Caco-2 (cell line): ENCODE measurements at regions of chr3 and their contacts with region 1.

Region 1: DNA sequence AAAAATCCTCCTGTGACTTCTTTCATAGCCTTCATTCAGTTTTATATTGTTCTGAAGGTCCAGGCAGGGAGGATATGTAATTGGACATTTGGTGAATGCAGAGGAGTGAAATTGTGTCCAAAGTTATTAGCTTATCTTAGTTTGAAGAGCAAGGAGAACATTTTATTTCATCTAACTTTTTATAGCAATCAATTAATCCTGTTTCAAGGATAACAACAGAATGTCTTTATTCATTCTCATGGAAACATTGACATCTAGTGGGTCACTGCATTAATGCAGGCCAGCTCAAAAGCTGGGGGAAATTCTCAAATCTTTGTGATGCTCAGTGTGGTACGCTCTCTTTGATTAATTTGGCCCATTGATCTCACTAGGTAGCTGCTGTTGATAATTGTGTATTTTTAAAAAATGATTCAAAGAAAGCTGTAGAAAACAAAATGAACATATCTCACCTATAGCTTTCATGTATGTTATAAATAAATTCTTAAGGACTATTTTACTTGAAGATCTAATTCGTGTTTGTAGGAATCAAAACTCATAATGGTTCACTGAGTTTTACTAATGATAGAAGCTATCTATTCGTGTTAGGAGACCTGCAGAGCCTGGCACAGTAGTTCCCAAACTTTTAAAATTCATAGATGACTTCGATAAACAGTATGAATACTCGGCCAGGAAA is 150.8 kb upstream of the KCNMB2 start:
- DNase-seq: peak in 1 of 2 experiments; percentile 46
- H3K4me3 ChIP-seq: no peak overlapping the region
- H3K4me3 Mint-ChIP-seq: no peak overlapping the region
- H3K27ac Mint-ChIP-seq: no peak overlapping the region
- H3K4me1 ChIP-seq: peaks cover 26% of the 10 kb centered on the region
- H3K4me1 Mint-ChIP-seq: peaks cover 8% of the 10 kb centered on the region
- H3K27me3 ChIP-seq: no peaks in the 10 kb centered on the region
- H3K27me3 Mint-ChIP-seq: no peaks in the 10 kb centered on the region
- CTCF ChIP-seq: peak; percentile 57 to 72

Region 2: GRCh38 chr3:176872771-176873209 is 1512.6 kb before region 1 on chr3:
- CTCF ChIA-PET with region 1: no interaction called
- POLR2A ChIA-PET with region 1: no interaction called
- intact Hi-C with region 1: loop called (anchors 5 kb)
- DNase-seq: peak; percentile 57 to 58
- H3K4me3 ChIP-seq: no peak overlapping the region
- H3K4me3 Mint-ChIP-seq: no peak overlapping the region
- H3K27ac Mint-ChIP-seq: no peak overlapping the region
- H3K4me1 ChIP-seq: no peaks in the 10 kb centered on the region
- H3K4me1 Mint-ChIP-seq: no peaks in the 10 kb centered on the region
- H3K27me3 ChIP-seq: no peaks in the 10 kb centered on the region
- H3K27me3 Mint-ChIP-seq: no peaks in the 10 kb centered on the region
- CTCF ChIP-seq: peak; percentile 71 to 73

Region 3: GRCh38 chr3:177050501-177051237 is 1334.7 kb before region 1 on chr3:
- CTCF ChIA-PET with region 1: interaction called, 6 read pairs
- POLR2A ChIA-PET with region 1: no interaction called
- intact Hi-C with region 1: loop called (anchors 10 kb)
- DNase-seq: peak in 1 of 2 experiments; percentile 17
- H3K4me3 ChIP-seq: no peak overlapping the region
- H3K4me3 Mint-ChIP-seq: no peak overlapping the region
- H3K27ac Mint-ChIP-seq: no peak overlapping the region
- H3K4me1 ChIP-seq: no peaks in the 10 kb centered on the region
- H3K4me1 Mint-ChIP-seq: peaks cover 6% of the 10 kb centered on the region
- H3K27me3 ChIP-seq: no peaks in the 10 kb centered on the region
- H3K27me3 Mint-ChIP-seq: no peaks in the 10 kb centered on the region
- CTCF ChIP-seq: peak; percentile 18 to 38

Region 4: DNA sequence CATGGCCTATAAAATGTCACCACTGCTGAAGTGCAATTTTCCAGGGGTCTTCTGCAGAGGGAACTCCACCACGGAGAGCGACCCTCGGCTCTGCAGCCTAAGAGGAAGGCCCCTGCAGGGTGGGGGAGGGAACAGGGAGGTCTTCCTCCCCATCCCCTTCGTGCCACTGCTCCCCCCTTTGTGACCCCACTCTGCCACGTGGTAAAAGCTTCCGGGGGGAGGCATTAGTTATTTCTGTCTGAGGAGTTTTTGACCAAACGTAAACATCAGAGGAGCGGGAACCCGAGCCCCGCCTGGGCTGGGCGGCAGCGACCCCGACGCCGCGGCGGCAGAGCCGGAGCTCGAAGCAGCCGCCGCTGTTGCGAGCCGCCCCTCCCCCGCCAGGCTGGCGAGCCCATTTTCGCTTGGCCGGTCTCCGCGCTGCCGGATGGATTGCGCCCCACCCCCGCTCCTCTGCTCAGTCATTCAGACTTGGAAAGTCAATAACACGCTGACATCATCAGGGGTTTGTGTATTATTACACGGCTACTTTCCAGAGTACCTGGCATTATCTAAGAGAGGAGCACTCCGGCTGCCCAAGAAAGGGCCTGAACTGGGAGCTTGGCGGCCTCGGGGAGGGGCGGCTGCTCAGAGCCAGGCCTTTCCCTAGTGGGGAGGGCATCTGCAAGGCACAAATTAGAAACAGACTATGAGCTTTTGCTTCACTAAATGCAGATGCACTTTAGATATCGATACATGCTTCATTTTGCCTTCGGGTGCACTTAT is 1025.6 kb before region 1 on chr3:
- CTCF ChIA-PET with region 1: no interaction called
- POLR2A ChIA-PET with region 1: no interaction called
- intact Hi-C with region 1: loop called (anchors 10 kb)
- DNase-seq: peak; percentile 94 to 97
- H3K4me3 ChIP-seq: peak overlapping the region; percentile 39
- H3K4me3 Mint-ChIP-seq: peak overlapping the region; percentile 77
- H3K27ac Mint-ChIP-seq: peak overlapping the region; percentile 89
- H3K4me1 ChIP-seq: peaks cover 39% of the 10 kb centered on the region
- H3K4me1 Mint-ChIP-seq: peaks cover 45% of the 10 kb centered on the region
- H3K27me3 ChIP-seq: no peaks in the 10 kb centered on the region
- H3K27me3 Mint-ChIP-seq: no peaks in the 10 kb centered on the region
- CTCF ChIP-seq: no peak

Region 5: GRCh38 chr3:177777699-177778098 is 607.7 kb before region 1 on chr3:
- CTCF ChIA-PET with region 1: no interaction called
- POLR2A ChIA-PET with region 1: no interaction called
- intact Hi-C with region 1: loop called (anchors 5 kb)
- DNase-seq: peak; percentile 66 to 67
- H3K4me3 ChIP-seq: no peak overlapping the region
- H3K4me3 Mint-ChIP-seq: no peak overlapping the region
- H3K27ac Mint-ChIP-seq: no peak overlapping the region
- H3K4me1 ChIP-seq: no peaks in the 10 kb centered on the region
- H3K4me1 Mint-ChIP-seq: no peaks in the 10 kb centered on the region
- H3K27me3 ChIP-seq: no peaks in the 10 kb centered on the region
- H3K27me3 Mint-ChIP-seq: no peaks in the 10 kb centered on the region
- CTCF ChIP-seq: peak; percentile 61 to 63

Region 6: DNA sequence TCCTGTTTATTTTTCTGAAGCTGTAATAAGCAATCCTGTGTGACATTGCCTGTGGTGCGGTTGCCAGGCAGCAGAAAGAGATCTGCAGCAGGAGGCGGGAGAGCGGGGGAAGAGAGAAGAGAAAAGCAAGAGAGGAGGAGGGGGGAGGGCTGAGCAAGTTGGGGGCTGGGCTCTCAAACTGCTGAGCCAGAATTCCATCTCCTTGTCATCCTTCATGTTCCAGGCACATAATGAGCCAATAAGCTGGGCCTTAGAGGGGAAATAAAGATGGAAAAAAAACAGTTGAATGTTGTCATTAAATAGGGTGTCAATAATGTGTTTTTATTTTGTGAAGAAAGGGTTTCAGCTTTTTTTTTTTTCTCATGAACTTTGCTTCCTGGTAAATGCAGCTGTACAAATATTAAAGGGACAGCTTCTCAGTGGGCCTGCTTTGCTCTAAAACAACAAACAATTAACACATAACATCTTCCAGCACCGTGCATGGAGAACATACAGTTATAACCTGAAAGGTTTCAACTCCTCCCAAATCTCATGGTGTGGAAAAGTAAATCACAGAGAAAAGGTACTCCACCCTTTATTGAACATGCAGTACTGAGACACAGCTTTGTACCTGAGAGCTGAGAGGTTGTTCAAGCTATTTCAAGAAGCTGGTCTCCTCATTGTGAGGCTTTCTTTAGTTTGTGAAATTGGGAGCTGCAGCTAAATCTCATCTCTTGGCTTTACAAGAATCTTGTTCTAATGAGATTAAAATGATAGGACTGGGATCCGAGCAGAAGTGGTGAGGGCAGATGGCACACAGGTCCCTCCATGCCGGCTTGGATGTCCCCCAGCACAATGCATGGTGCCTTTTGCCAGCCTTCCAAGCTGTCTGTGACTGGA is 300.2 kb before region 1 on chr3:
- CTCF ChIA-PET with region 1: interaction called, 3 read pairs
- POLR2A ChIA-PET with region 1: no interaction called
- intact Hi-C with region 1: loop called (anchors 10 kb)
- DNase-seq: peak; percentile 40 to 56
- H3K4me3 ChIP-seq: no peak overlapping the region
- H3K4me3 Mint-ChIP-seq: peak overlapping the region; percentile 10
- H3K27ac Mint-ChIP-seq: no peak overlapping the region
- H3K4me1 ChIP-seq: peaks cover 26% of the 10 kb centered on the region
- H3K4me1 Mint-ChIP-seq: peaks cover 18% of the 10 kb centered on the region
- H3K27me3 ChIP-seq: no peaks in the 10 kb centered on the region
- H3K27me3 Mint-ChIP-seq: no peaks in the 10 kb centered on the region
- CTCF ChIP-seq: no peak

Region 7: GRCh38 chr3:178352326-178353005 is 33.0 kb before region 1 on chr3:
- CTCF ChIA-PET with region 1: no interaction called
- POLR2A ChIA-PET with region 1: no interaction called
- intact Hi-C with region 1: loop called (anchors 2 kb)
- DNase-seq: peak; percentile 52 to 57
- H3K4me3 ChIP-seq: no peak overlapping the region
- H3K4me3 Mint-ChIP-seq: peak overlapping the region; percentile 41
- H3K27ac Mint-ChIP-seq: no peak overlapping the region
- H3K4me1 ChIP-seq: peaks cover 39% of the 10 kb centered on the region
- H3K4me1 Mint-ChIP-seq: peaks cover 14% of the 10 kb centered on the region
- H3K27me3 ChIP-seq: no peaks in the 10 kb centered on the region
- H3K27me3 Mint-ChIP-seq: no peaks in the 10 kb centered on the region
- CTCF ChIP-seq: no peak